ENCODE measurements at regions of chr19 and their contacts with region 1.

Region 1: DNA sequence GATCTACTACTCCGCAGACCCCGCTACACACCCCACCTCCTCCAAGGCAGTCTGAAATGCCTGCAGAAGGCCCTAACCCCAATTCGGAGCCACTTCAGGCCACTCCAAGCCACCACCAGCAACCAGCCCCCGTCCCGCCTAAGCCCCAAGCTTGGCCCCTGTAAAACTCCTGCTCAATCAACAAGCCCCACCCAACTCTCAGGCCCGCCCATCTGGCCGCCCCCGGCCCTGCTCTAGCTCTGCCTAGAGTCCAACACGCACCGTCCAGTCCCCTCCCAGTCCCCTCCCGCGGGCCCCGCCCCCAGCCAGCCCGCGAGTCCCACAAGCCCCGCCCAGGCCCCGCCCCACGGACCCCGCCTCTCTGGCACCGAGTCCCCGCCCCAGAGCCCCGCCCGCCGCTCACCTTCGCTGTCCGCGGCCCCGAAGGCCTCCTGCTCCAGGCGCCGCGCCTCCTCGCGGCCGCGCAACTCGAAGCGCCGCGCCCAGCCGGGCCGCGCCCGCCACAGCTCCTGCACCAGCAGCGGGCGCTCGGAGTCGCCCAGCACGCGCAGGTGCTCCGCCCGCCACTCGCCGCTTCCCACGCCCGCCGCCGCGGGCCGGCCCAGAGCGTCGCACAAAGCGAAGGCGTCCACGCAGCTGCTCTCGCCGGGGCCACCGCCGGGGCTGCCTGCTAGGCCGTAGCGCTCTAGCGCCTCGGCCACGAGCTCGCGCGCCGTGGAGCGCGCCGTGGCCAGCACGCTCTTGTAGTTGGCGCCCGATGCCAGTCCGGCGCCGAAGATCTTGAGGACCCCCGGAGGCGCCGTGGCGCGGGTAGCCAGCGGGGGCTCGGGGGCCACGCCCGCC is 1.6 kb downstream of the RASIP1 start:
- DNase-seq: peak; percentile 92
- ATAC-seq: peak; percentile 96
- H3K4me3 ChIP-seq: peak overlapping the region; percentile 53 to 89 (median 81)
- H3K27ac ChIP-seq: peak overlapping the region; percentile 94
- H3K4me1 ChIP-seq: peaks cover 38% of the 10 kb centered on the region
- H3K27me3 ChIP-seq: peaks cover 0 to 1% of the 10 kb centered on the region in 2 experiments; a peak in 1 of 5 replicates
- CTCF ChIP-seq: peak; percentile 76
- EP300 ChIP-seq: no peak
- POLR2A ChIP-seq: peak; percentile 61 to 91
- RAD21 ChIP-seq: peak; percentile 98

Region 2: GRCh38 chr19:48646001-48646721 is 92.6 kb before region 1 on chr19 and contains the start of gene CA11:
- CTCF ChIA-PET with region 1: interaction called, 10 read pairs
- POLR2A ChIA-PET with region 1: interaction called, 4 read pairs
- in situ Hi-C with region 1: no loop called
- intact Hi-C with region 1: no loop called
- DNase-seq: peak; percentile 70
- ATAC-seq: peak; percentile 92
- H3K4me3 ChIP-seq: peak within 1 kb of the TSS; percentile 52 to 69 (median 59)
- H3K27ac ChIP-seq: no peak within 1 kb of the TSS
- H3K4me1 ChIP-seq: peaks cover 18% of the 10 kb centered on the region
- H3K27me3 ChIP-seq: peaks cover 0 to 1% of the 10 kb centered on the region in 2 experiments; a peak in 2 of 5 replicates
- CTCF ChIP-seq: peak; percentile 98
- EP300 ChIP-seq: no peak
- POLR2A ChIP-seq: no peak
- RAD21 ChIP-seq: peak; percentile 88
- total RNA-seq, gene CA11: 0.24 and 0.58 TPM in 2 replicates

Region 3: DNA sequence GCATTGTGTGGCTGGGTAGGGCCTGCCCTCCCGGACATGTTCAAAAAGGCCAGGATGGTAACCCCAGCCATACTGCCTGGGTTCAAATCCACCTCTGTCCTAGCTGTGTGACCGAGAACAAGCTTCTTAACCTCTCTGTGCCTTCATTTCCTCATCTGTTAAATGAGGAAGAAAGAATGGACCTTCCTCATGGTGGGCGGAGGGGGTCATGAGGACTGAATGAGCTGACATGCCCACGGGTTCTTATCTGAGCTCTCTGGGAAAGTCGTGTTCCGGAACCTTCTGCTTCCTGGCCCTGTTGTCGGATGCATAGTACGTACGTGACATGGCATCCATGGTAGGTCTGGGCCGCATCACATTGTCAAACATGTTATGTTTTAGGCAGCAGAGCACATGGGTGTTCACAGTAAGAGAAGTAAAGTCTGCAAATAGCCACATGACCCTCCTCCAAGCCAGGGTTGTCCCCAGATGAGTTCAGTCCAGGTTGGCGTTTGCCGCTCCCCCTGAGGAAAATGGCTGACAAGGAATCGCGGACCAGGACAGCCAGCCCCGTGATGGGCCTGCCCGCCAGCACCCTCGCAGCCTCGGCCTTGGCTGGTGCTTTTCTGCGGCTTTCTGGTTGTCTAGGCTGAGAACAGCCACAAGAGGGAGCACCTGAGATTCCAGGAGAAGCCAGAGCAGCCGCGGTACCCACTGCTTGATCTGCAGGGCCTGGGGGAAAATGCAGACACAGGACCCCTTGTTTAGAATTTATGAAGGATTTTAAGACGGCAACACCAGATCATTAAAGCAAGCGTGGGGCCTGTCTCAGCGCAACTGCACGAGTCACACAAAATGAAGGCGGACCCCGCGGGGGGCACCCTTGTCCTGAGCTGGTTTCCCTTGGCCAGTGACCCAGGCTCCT is 63.6 kb before region 1 on chr19:
- CTCF ChIA-PET with region 1: interaction called, 18 read pairs
- POLR2A ChIA-PET with region 1: interaction called, 3 read pairs
- in situ Hi-C with region 1: no loop called
- intact Hi-C with region 1: loop called (anchors 1 kb)
- DNase-seq: peak; percentile 77
- ATAC-seq: peak; percentile 75
- H3K4me3 ChIP-seq: no peak overlapping the region; a peak in 1 of 6 replicates
- H3K27ac ChIP-seq: no peak overlapping the region
- H3K4me1 ChIP-seq: peaks cover 25% of the 10 kb centered on the region
- H3K27me3 ChIP-seq: peaks cover 4 to 22% of the 10 kb centered on the region in 2 experiments; a peak in 4 of 5 replicates
- CTCF ChIP-seq: peak; percentile 94
- EP300 ChIP-seq: 0 out of 4 replicates have a peak, but pooled peaks of 1 of the 2 experiments have one; percentile 8
- POLR2A ChIP-seq: no peak
- RAD21 ChIP-seq: peak; percentile 91

Region 4: GRCh38 chr19:48713864-48714758 is 24.7 kb before region 1 on chr19:
- CTCF ChIA-PET with region 1: interaction called, 11 read pairs
- POLR2A ChIA-PET with region 1: interaction called, 40 read pairs
- in situ Hi-C with region 1: no loop called
- intact Hi-C with region 1: loop called (anchors 1 kb)
- DNase-seq: peak; percentile 99
- ATAC-seq: peak; percentile 85
- H3K4me3 ChIP-seq: peak overlapping the region; percentile 81 to 94 (median 89)
- H3K27ac ChIP-seq: peak overlapping the region; percentile 91
- H3K4me1 ChIP-seq: peaks cover 48% of the 10 kb centered on the region
- H3K27me3 ChIP-seq: no peaks in the 10 kb centered on the region; a peak in 1 of 5 replicates
- CTCF ChIP-seq: peak; percentile 23; the same call in 1 of the 2 replicates
- EP300 ChIP-seq: no peak
- POLR2A ChIP-seq: peak in 1 of 2 experiments; percentile 80; a peak in 3 of 4 replicates
- RAD21 ChIP-seq: 0 out of 2 replicates have a peak, but pooled peaks have one; percentile 27

Region 5: GRCh38 chr19:48720613-48721296 is 18.0 kb before region 1 on chr19:
- CTCF ChIA-PET with region 1: no interaction called
- POLR2A ChIA-PET with region 1: interaction called, 40 read pairs
- in situ Hi-C with region 1: no loop called
- intact Hi-C with region 1: no loop called
- DNase-seq: peak; percentile 98
- ATAC-seq: peak; percentile 83
- H3K4me3 ChIP-seq: peak overlapping the region; percentile 68 to 85 (median 76); a peak in 5 of 6 replicates
- H3K27ac ChIP-seq: peak overlapping the region; percentile 74
- H3K4me1 ChIP-seq: peaks cover 61% of the 10 kb centered on the region
- H3K27me3 ChIP-seq: no peaks in the 10 kb centered on the region; a peak in 1 of 5 replicates
- CTCF ChIP-seq: 0 out of 2 replicates have a peak, but pooled peaks have one; percentile 15
- EP300 ChIP-seq: no peak
- POLR2A ChIP-seq: 0 out of 4 replicates have a peak, but pooled peaks of 1 of the 2 experiments have one; percentile 12
- RAD21 ChIP-seq: no peak

Region 6: DNA sequence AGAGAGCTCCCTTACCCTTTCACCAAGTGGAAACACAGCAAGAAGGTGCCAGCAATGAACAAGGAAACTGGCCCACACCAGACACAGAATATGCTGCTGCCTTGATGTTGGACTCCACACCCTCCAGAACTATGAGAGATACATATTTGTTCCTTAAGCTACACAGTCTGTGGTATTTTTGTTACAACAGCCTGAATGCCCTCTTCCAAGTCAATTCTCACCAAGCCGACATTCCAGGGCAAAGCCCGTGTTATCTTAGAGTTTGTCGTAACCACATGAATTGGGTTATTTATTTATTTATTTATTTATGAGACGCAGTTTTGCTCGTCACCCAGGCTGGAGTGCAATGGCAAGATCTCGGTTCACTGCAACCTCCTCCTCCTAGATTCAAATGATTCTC is 31.5 kb after region 1 on chr19:
- CTCF ChIA-PET with region 1: no interaction called
- POLR2A ChIA-PET with region 1: interaction called, 14 read pairs
- in situ Hi-C with region 1: no loop called
- intact Hi-C with region 1: no loop called
- DNase-seq: no peak
- ATAC-seq: no peak
- H3K4me3 ChIP-seq: no peak overlapping the region; a peak in 1 of 6 replicates
- H3K27ac ChIP-seq: no peak overlapping the region
- H3K4me1 ChIP-seq: peaks cover 63% of the 10 kb centered on the region
- H3K27me3 ChIP-seq: no peaks in the 10 kb centered on the region
- CTCF ChIP-seq: no peak
- EP300 ChIP-seq: no peak
- POLR2A ChIP-seq: no peak
- RAD21 ChIP-seq: no peak